ENCODE measurements at regions of chr14 and their contacts with region 1.

Region 1: DNA sequence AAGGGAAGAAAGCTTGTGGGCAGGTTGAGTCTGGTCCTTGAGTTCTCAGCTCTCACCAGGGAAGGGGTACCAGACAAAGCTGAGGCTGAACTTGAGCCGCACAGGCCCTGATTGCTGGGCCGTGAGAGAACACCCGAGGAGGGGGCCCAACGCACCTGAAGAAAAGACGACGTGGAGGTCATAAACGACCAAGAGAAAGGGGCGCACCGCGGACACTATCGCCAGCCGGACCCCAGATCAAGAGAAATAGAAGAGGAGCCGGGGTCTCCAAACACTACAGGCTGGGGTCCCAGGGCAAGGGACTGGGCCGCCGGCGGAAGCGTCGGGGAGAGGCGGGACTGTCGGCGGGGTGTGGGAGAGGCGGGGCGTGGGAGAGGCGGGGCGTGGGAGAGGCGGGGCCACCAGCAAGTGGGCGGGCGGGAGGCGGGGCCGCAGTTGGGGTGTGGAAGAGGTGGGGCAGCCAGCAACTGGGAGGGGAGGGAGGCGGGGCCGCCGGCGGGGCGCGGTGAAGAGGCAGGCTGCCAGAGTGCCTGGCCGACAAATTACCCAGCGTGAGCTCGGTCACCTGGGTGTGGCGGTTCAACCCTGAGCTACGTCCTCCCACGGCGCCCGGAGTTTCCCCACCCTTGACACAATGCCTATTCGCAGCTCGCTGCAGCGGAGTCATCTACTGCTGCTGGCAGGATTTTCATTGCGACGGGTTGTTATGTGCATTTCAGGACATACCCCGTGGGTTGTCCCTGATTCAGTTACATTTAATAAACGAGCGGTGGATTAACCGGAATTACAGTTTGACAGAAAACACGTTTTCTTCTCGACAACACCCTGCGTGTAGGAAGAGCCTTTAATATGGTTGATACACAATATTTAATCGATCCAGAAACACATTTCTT is 15.5 kb upstream of the NEMF start:
- DNase-seq: peak; percentile 99
- ATAC-seq: peak; percentile 93 to 99 (median 96)
- H3K4me3 ChIP-seq: peak overlapping the region; percentile 45 to 65 (median 60)
- H3K27ac ChIP-seq: peak overlapping the region; percentile 87 to 92 (median 89)
- H3K4me1 ChIP-seq: peaks cover 0 to 4% (median 0%) of the 10 kb centered on the region in 4 donors
- H3K27me3 ChIP-seq: no peaks in the 10 kb centered on the region
- CTCF ChIP-seq: no peak
- POLR2A ChIP-seq: peak; percentile 93

Region 2: DNA sequence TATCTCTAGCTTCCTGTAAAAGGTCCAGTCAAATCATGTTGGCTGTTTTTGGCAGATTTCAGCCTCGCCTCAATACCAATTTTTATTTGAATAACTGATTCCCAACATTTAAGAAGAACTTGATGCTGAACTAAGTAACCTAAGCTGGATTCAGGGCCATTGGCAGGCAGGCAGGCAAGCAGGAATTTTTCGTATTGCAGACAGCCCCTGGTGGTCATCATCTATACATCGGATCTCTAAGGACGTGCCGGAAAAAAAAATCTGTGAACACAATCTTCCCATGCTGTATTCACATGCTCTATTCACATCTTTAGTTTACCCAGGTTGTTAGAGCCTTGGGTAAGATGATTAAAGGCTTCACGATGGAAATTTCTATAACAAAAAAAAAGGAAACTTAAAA is 241.3 kb after region 1 on chr14:
- intact Hi-C with region 1: loop called (anchors 5 to 10 kb)
- DNase-seq: no peak
- ATAC-seq: no peak
- H3K4me3 ChIP-seq: no peak overlapping the region
- H3K27ac ChIP-seq: no peak overlapping the region
- H3K4me1 ChIP-seq: peaks cover 0 to 4% (median 0%) of the 10 kb centered on the region in 4 donors
- H3K27me3 ChIP-seq: no peaks in the 10 kb centered on the region
- CTCF ChIP-seq: no peak
- POLR2A ChIP-seq: no peak